Activated T-helper 2 cell treated with anti-CD3 and anti-CD28 coated beads, Interferon-gamma antibody, Interleukin-2, Interleukin-4, amounts not matched to agents 10 μg/mL and 5 μg/mL and 100 μg/mL, durations not matched to agents 14 hours and 24 hours and 36 hours (primary cell): ENCODE measurements at regions of chr1 and their contacts with region 1.

Region 1: GRCh38 chr1:202852163-202852904 is 36.6 kb downstream of the RABIF start:
- DNase-seq: peak; percentile 24
- H3K4me3 Mint-ChIP-seq: no peak overlapping the region
- H3K27ac Mint-ChIP-seq: no peak overlapping the region
- H3K4me1 Mint-ChIP-seq: peaks cover 7% of the 10 kb centered on the region
- H3K27me3 Mint-ChIP-seq: no peaks in the 10 kb centered on the region

Region 2: DNA sequence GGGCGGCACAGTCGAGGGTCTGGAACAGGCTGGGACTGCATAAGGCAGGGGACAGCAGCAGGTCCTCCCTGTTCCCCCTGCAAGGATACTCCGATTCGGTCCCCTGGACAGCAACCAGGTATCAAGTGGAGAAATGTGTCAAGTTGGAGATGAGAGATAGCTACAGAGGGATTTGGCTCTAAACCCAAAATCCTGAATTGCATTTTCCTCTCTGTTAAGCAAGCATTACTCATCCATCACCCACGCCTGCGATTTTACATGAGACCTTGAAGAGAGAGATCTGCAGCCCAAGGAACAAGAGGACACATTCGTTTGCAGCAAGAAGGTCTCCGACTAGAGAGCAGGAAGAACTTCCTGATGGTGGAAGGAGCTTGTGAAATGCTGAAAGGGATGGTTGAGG is 164.0 kb before region 1 on chr1:
- intact Hi-C with region 1: no loop called
- DNase-seq: no peak
- H3K4me3 Mint-ChIP-seq: no peak overlapping the region
- H3K27ac Mint-ChIP-seq: no peak overlapping the region
- H3K4me1 Mint-ChIP-seq: no peaks in the 10 kb centered on the region
- H3K27me3 Mint-ChIP-seq: peaks cover 7% of the 10 kb centered on the region

Region 3: DNA sequence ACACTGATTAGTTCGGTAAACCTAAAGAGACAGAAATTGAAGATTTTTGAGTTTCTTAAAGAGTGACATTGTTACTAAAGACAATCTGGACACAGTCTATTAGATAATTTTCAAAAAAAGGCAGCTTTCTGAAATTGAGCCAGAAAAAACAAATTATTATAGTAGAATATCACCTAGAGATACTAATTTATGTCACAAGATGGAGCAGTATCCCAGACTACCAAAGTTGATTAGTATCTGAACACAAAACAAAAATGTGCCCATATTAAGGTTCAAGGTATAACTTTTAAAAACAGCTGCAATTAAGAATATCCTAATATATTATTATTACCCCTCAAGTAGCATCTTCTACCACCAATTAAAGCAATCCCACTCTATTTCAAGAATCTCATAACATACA is 101.6 kb before region 1 on chr1:
- intact Hi-C with region 1: loop called (anchors 2 kb)
- DNase-seq: no peak
- H3K4me3 Mint-ChIP-seq: no peak overlapping the region
- H3K27ac Mint-ChIP-seq: no peak overlapping the region
- H3K4me1 Mint-ChIP-seq: no peaks in the 10 kb centered on the region
- H3K27me3 Mint-ChIP-seq: no peaks in the 10 kb centered on the region